Vagina (tissue), 2 donors: ENCODE measurements at regions of chr11 and their contacts with region 1.

Region 1: DNA sequence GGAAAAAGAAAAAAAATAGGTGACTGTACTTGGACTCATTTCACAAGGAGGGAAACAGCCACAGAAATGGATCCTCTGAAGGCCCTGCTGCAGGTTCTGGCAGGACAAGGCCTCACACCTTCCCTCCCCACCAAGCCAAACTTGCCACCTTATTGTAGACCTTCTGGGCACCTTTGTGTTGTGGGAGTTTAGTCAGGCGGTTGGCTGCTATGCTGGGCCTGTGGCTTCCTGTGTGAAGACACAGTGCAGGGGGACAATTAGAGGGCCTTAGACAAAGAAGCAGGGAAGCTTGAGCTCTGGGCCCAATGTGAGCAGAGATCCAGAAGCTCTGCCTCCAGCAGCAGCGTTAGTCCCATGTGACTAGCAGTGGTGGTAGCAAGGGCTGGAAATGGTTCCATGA is 4.2 kb downstream of the RAB1B start:
- DNase-seq: no peak
- H3K4me3 ChIP-seq: no peak overlapping the region
- H3K27ac ChIP-seq: no peak overlapping the region
- H3K4me1 ChIP-seq: peaks cover 46% of the 10 kb centered on the region
- H3K27me3 ChIP-seq: no peaks in the 10 kb centered on the region
- CTCF ChIP-seq: no peak
- POLR2A ChIP-seq: no peak

Region 2: GRCh38 chr11:66022401-66023185 is 250.0 kb before region 1 on chr11:
- intact Hi-C with region 1: no loop called
- DNase-seq: no peak
- H3K4me3 ChIP-seq: peak overlapping the region in 1 of 2 donors; percentile 8
- H3K27ac ChIP-seq: no peak overlapping the region
- H3K4me1 ChIP-seq: peaks cover 4% of the 10 kb centered on the region
- H3K27me3 ChIP-seq: no peaks in the 10 kb centered on the region
- CTCF ChIP-seq: peak; percentile 74 to 86 (median 81)
- POLR2A ChIP-seq: no peak

Region 3: DNA sequence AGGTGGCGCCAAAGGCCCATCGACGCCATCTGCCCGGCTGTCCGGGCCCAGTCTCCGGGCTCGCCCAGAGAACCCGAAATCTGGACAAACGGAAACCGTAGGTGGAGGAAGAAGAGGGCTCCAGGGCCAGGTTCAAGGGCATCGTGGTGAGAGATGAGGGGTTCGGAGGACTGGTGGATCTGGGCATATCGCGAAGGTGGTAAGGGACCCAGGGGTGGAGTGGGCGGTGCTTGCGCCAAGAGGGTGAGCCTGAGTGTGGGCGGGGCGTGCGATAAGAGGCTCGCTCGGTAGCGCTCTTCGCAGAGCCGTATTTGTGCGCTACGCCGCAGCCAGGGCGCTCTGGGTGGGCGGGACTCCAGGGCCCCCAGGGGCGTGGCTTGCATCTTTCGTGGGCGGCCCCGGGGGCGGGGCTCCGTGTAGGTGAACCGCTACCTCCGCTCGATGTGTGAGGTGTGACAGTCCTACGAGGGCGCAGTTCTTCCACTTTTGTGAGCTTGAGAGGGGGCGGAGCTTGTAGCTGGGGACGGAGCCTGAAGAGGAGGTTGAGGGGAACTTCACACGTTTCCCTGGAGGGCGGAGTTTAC is 39.5 kb after region 1 on chr11:
- intact Hi-C with region 1: loop called (anchors 1 kb)
- DNase-seq: no peak
- H3K4me3 ChIP-seq: peak overlapping the region; percentile 58 to 68
- H3K27ac ChIP-seq: peak overlapping the region; percentile 85
- H3K4me1 ChIP-seq: peaks cover 40% of the 10 kb centered on the region
- H3K27me3 ChIP-seq: no peaks in the 10 kb centered on the region
- CTCF ChIP-seq: peak; percentile 87 to 97 (median 89)
- POLR2A ChIP-seq: no peak